ENCODE measurements at regions of chr2 and their contacts with region 1.

Region 1: DNA sequence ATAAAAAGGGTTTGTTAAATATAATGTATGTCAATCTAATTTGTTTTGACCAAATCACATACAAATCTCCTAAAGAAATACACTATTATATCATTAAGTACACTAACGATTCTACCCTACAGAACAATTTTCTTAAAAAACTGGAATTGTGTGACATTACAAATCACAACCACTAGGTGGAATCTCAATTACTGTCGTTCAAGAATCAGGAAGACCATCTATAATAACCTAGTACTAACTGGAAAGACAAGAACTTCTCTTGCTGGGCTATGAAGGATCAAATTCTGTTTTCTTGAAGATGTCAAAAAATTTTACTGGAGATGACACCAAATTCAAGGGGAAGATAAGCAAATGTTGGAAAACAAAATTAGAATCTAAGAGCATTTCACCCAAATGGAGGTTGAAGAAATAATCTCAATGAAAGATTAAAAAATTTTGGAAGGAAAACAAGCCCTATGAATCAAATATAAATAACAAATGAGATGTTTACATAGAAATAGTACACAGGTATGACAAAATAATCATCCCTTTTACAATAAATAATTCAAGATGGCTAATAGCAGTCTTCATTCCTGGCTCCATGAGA is 110.9 kb downstream of the STK39 start:
- DNase-seq: no peak
- H3K4me3 Mint-ChIP-seq: no peak overlapping the region
- H3K27ac Mint-ChIP-seq: no peak overlapping the region
- H3K4me1 Mint-ChIP-seq: peaks cover 19% of the 10 kb centered on the region
- H3K27me3 Mint-ChIP-seq: no peaks in the 10 kb centered on the region

Region 2: DNA sequence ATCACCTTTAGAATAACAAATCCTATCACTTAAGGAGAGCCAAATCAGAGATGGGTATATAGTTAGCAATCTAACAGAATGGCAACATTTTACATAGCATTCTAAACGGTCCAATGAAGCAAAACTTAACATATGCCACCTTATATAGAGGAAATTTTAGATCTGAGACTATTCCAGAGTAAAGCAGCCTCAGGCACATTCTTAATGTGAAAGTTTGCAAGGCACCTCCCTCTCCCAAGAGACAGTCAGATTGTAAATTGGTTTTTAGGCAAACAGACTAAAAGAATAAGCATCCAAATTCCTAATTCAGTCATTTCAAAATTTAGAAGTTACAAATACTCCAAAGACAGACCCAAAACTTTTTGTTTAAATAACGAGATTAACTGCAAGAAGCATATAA is 182.0 kb before region 1 on chr2:
- CTCF ChIA-PET with region 1: no interaction called
- POLR2A ChIA-PET with region 1: no interaction called
- intact Hi-C with region 1: no loop called
- DNase-seq: no peak
- H3K4me3 Mint-ChIP-seq: no peak overlapping the region
- H3K27ac Mint-ChIP-seq: no peak overlapping the region
- H3K4me1 Mint-ChIP-seq: no peaks in the 10 kb centered on the region
- H3K27me3 Mint-ChIP-seq: no peaks in the 10 kb centered on the region

Region 3: DNA sequence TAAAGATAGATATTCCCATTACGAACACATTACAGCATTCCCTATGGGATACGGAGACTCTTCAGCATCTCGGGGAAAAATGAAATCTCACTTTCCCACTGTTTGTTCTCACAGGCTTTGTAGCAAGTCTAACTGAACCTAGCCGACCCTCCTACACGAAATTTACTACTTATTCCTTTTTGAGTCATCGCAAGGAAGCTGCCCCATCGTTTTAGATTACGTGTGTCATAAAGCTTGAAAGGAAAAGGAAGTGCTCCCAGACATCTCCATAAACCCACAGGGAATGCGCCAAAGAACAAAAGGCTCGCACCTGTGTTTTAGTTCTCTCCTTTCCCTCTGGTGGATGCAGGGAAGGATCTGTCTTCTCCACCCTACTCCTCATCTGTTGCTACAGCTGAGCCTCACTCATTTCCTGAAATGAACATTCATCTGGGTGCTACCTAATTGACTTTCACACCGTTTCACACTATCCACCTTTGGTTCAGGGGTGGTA is 187.1 kb after region 1 on chr2:
- CTCF ChIA-PET with region 1: no interaction called
- POLR2A ChIA-PET with region 1: no interaction called
- intact Hi-C with region 1: loop called (anchors 5 kb)
- DNase-seq: peak; percentile 17
- H3K4me3 Mint-ChIP-seq: no peak overlapping the region
- H3K27ac Mint-ChIP-seq: no peak overlapping the region
- H3K4me1 Mint-ChIP-seq: peaks cover 12% of the 10 kb centered on the region
- H3K27me3 Mint-ChIP-seq: peaks cover 30% of the 10 kb centered on the region

Region 4: GRCh38 chr2:168336864-168337263 is 200.4 kb after region 1 on chr2:
- CTCF ChIA-PET with region 1: interaction called, 11 read pairs
- POLR2A ChIA-PET with region 1: no interaction called
- intact Hi-C with region 1: loop called (anchors 1 kb)
- DNase-seq: peak; percentile 72
- H3K4me3 Mint-ChIP-seq: no peak overlapping the region
- H3K27ac Mint-ChIP-seq: no peak overlapping the region
- H3K4me1 Mint-ChIP-seq: peaks cover 8% of the 10 kb centered on the region
- H3K27me3 Mint-ChIP-seq: no peaks in the 10 kb centered on the region

Region 5: GRCh38 chr2:168758970-168759820 is 622.7 kb after region 1 on chr2:
- CTCF ChIA-PET with region 1: no interaction called
- POLR2A ChIA-PET with region 1: no interaction called
- intact Hi-C with region 1: loop called (anchors 10 kb)
- DNase-seq: peak; percentile 21
- H3K4me3 Mint-ChIP-seq: no peak overlapping the region
- H3K27ac Mint-ChIP-seq: no peak overlapping the region
- H3K4me1 Mint-ChIP-seq: peaks cover 39% of the 10 kb centered on the region
- H3K27me3 Mint-ChIP-seq: no peaks in the 10 kb centered on the region

Measured in activated CD4-positive, alpha-beta memory T cell treated with anti-CD3 and anti-CD28 coated beads for 36 hours (primary cell).